ENCODE measurements at regions of chr19 and their contacts with region 1.

Region 1: DNA sequence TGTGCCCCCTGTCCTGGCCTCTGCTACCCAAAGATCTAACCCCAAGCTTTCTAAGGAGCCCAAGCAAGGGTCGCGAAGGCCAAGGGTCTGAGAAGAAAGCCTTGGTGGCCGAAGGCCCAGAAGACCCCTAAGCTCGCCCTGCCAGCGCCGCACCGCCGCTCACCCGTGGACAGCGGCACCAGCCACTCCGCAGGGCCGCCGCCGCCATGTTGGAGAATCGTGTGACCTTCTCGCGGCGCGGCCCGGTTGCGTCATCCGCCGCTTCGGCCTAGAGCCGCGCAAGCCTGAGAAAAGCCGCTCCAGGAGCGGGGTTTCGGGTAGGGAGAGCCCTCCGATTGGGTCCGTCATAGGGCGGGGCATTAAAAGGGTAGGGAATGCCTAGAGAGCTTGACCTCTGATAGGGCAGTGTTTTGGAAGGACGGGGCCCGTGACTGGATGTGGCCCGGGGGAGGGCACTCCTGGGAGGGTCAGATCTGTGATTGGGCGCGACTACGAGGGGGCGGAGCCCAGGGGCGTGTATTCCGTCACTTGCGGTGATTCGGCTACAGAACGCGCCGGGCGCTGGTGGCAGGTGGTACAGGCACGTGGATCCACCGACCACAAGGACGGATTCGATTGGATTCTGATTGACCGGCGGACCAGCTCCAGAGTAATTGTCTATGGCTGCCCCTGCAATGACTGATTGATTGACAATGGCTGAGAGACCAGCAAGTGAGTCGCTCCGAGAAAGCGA is at the start of gene TIMM44:
- DNase-seq: peak; percentile 99
- H3K4me3 Mint-ChIP-seq: peak within 1 kb of the TSS; percentile 92
- H3K27ac Mint-ChIP-seq: peak within 1 kb of the TSS; percentile 98
- H3K4me1 Mint-ChIP-seq: peaks cover 38% of the 10 kb centered on the region
- H3K27me3 Mint-ChIP-seq: no peaks in the 10 kb centered on the region
- total RNA-seq, gene TIMM44: 66.5 to 68.5 TPM

Region 2: GRCh38 chr19:7829561-7830271 is 113.9 kb before region 1 on chr19 and contains the start of gene EVI5L:
- CTCF ChIA-PET with region 1: no interaction called
- POLR2A ChIA-PET with region 1: no interaction called
- intact Hi-C with region 1: no loop called
- DNase-seq: peak; percentile 99
- H3K4me3 Mint-ChIP-seq: peak within 1 kb of the TSS; percentile 81
- H3K27ac Mint-ChIP-seq: peak within 1 kb of the TSS; percentile 55
- H3K4me1 Mint-ChIP-seq: peaks cover 17% of the 10 kb centered on the region
- H3K27me3 Mint-ChIP-seq: peaks cover 3% of the 10 kb centered on the region
- total RNA-seq, gene EVI5L: 5.0 to 5.6 TPM

Region 3: GRCh38 chr19:7852851-7853769 is 90.5 kb before region 1 on chr19:
- CTCF ChIA-PET with region 1: interaction called, 14 read pairs
- POLR2A ChIA-PET with region 1: no interaction called
- intact Hi-C with region 1: no loop called
- DNase-seq: peak; percentile 79
- H3K4me3 Mint-ChIP-seq: no peak overlapping the region
- H3K27ac Mint-ChIP-seq: no peak overlapping the region
- H3K4me1 Mint-ChIP-seq: peaks cover 4% of the 10 kb centered on the region
- H3K27me3 Mint-ChIP-seq: no peaks in the 10 kb centered on the region

Region 4: GRCh38 chr19:7919610-7920518 is 23.7 kb before region 1 on chr19 and contains the start of gene SNAPC2:
- CTCF ChIA-PET with region 1: interaction called, 22 read pairs
- POLR2A ChIA-PET with region 1: interaction called, 7 read pairs
- intact Hi-C with region 1: loop called (anchors 1 kb)
- DNase-seq: peak; percentile 98
- H3K4me3 Mint-ChIP-seq: peak within 1 kb of the TSS; percentile 83
- H3K27ac Mint-ChIP-seq: peak within 1 kb of the TSS; percentile 84
- H3K4me1 Mint-ChIP-seq: peaks cover 33% of the 10 kb centered on the region
- H3K27me3 Mint-ChIP-seq: peaks cover 22% of the 10 kb centered on the region
- total RNA-seq, gene SNAPC2: 18.7 to 20.2 TPM

Region 5: DNA sequence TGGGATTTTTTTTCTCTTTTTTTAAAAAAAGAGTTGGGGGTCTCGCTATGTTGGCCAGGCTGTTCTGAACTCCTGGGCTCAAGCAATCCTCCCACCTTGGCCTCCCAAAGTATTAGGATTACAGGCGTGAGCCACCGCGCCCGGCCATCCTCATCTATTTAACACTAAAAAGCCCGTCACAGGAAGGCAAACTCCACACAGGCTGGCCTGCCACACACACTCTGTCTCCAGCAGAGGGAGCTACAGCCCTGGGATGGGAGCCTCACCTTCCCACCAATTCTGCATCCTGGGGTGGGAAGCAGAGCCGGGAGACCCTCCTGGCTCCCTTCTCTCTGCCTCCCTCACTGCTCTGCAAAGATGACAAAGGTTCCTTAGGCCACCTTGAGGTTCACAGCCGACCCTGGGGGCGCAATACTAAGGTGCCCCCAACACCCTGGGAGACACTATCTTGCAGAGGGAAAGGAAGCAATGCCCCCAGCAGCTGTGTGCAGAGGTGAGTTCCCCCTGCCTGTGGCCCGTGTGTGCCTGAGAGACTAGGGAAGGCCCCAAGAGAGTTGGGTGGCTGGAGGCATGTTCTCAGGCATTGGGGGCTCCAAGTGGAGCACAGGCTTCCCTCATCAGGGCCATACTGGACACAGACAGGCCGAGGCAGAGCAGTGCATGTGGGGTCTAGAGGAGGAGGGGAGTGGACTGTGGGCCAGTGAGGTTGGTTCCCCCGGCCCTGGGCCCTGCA is 27.3 kb after region 1 on chr19:
- CTCF ChIA-PET with region 1: interaction called, 15 read pairs
- POLR2A ChIA-PET with region 1: no interaction called
- intact Hi-C with region 1: no loop called
- DNase-seq: peak; percentile 36
- H3K4me3 Mint-ChIP-seq: no peak overlapping the region
- H3K27ac Mint-ChIP-seq: no peak overlapping the region
- H3K4me1 Mint-ChIP-seq: no peaks in the 10 kb centered on the region
- H3K27me3 Mint-ChIP-seq: no peaks in the 10 kb centered on the region

Region 6: DNA sequence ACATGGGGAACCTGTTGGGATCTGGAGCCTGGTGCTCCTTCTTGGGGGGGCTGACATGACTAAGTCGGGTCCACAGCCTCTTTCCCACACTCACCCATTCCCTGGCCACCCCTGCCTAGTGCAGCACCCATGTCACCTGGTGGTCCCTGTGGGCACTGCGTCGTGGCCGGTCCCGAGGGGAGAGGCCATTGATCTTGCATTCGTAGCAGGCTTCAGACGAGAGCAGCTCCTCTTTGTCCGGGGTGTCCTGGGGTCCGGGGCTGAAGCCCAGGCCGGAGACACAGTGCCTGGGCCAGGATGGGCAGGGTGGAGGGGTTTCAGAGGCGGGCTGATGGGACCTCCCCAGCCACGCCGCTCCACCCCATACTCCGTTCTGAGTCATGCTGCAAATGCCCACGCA is 128.3 kb after region 1 on chr19:
- CTCF ChIA-PET with region 1: interaction called, 8 read pairs
- POLR2A ChIA-PET with region 1: no interaction called
- intact Hi-C with region 1: loop called (anchors 5 kb)
- DNase-seq: no peak
- H3K4me3 Mint-ChIP-seq: no peak overlapping the region
- H3K27ac Mint-ChIP-seq: no peak overlapping the region
- H3K4me1 Mint-ChIP-seq: no peaks in the 10 kb centered on the region
- H3K27me3 Mint-ChIP-seq: no peaks in the 10 kb centered on the region

Region 7: GRCh38 chr19:8085598-8086408 is 142.2 kb after region 1 on chr19:
- CTCF ChIA-PET with region 1: no interaction called
- POLR2A ChIA-PET with region 1: no interaction called
- intact Hi-C with region 1: no loop called
- DNase-seq: no peak
- H3K4me3 Mint-ChIP-seq: no peak overlapping the region
- H3K27ac Mint-ChIP-seq: no peak overlapping the region
- H3K4me1 Mint-ChIP-seq: no peaks in the 10 kb centered on the region
- H3K27me3 Mint-ChIP-seq: peaks cover 2% of the 10 kb centered on the region

Region 8: DNA sequence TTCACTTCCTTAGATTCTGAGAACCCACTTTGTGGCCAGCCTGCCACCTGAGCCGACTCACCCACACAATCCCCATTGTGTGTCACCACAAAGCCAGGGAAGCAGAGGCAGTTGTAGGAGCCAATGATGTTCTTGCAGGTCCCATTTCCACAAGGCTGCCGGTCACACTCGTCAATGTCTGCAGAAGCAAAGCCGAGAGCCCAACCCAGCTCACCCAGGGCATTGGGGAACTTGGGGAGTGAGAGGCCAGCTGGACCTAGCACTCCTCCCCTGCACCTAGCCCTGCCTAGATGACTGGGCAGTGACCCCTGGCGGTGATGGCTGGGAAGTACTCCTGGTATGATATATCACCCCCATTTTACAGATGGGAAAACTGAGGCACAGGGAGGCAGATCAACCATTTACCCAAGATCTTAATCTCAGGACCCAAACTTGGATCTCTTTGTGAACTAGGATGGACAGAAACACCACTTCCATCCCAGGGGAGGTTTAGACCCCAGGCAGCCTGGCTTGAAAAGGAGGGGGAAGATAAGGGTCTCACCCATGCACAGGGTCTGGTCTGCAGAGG is 152.4 kb after region 1 on chr19:
- CTCF ChIA-PET with region 1: no interaction called
- POLR2A ChIA-PET with region 1: no interaction called
- intact Hi-C with region 1: no loop called
- DNase-seq: no peak
- H3K4me3 Mint-ChIP-seq: no peak overlapping the region
- H3K27ac Mint-ChIP-seq: no peak overlapping the region
- H3K4me1 Mint-ChIP-seq: no peaks in the 10 kb centered on the region
- H3K27me3 Mint-ChIP-seq: peaks cover 5% of the 10 kb centered on the region